Natural killer cell (primary cell): ENCODE measurements at regions of chr1 and their contacts with region 1.

Region 1: GRCh38 chr1:20696397-20697329 is 21.1 kb downstream of the KIF17 start:
- DNase-seq: peak; percentile 69 to 84
- ATAC-seq: peak; percentile 91 to 94 (median 93)
- H3K4me3 ChIP-seq: peak overlapping the region; percentile 66
- H3K4me3 Mint-ChIP-seq: peak overlapping the region; percentile 95
- H3K27ac ChIP-seq: no peak overlapping the region
- H3K27ac Mint-ChIP-seq: peak overlapping the region; percentile 14 to 83
- H3K4me1 ChIP-seq: peaks cover 12% of the 10 kb centered on the region
- H3K4me1 Mint-ChIP-seq: peaks cover 11 to 13% of the 10 kb centered on the region in 2 donors
- H3K27me3 ChIP-seq: no peaks in the 10 kb centered on the region
- H3K27me3 Mint-ChIP-seq: peaks cover 0 to 6% of the 10 kb centered on the region in 2 donors
- CTCF ChIP-seq: peak; percentile 99

Region 2: DNA sequence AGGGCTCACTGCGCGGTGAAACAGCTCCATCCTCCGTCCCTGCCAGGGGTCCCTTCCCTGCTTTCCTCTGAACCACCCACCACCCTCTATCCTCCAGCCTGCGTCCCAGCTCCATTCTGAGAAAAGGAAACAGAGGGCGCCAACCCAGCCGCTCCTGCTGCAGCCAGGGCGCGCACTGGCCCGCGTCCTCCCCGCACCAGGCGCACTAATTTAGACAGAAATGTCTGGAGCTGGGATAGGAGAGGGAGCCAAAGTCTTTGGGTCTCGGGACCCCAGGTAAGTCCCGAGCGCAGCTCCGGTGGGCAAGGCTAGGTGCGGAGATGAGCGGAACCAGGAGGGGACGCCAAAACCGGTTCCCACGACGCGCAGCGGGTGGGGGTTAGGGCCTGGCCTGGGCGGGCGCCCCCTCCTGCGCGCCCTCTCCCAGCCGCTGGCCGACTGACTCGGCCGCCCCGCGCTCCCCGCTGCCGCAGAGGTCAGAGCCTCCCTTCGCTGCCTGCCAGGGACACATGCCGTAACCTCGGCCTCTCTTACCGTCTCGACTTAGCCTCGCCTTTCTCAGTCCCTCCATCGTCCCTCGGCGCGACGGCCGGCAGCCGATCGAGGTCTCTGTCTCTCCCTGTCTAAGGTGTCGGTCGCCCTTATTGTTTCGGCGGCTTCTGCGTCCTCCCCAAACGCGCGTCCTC is 212.7 kb before region 1 on chr1:
- intact Hi-C with region 1: no loop called
- DNase-seq: peak in 1 of 2 donors; percentile 27
- ATAC-seq: no peak
- H3K4me3 ChIP-seq: peak overlapping the region; percentile 25
- H3K4me3 Mint-ChIP-seq: peak overlapping the region; percentile 73
- H3K27ac ChIP-seq: no peak overlapping the region
- H3K27ac Mint-ChIP-seq: no peak overlapping the region
- H3K4me1 ChIP-seq: peaks cover 27% of the 10 kb centered on the region
- H3K4me1 Mint-ChIP-seq: peaks cover 0 to 14% of the 10 kb centered on the region in 2 donors
- H3K27me3 ChIP-seq: peaks cover 28% of the 10 kb centered on the region
- H3K27me3 Mint-ChIP-seq: peaks cover 54 to 71% of the 10 kb centered on the region in 2 donors
- CTCF ChIP-seq: no peak

Region 3: DNA sequence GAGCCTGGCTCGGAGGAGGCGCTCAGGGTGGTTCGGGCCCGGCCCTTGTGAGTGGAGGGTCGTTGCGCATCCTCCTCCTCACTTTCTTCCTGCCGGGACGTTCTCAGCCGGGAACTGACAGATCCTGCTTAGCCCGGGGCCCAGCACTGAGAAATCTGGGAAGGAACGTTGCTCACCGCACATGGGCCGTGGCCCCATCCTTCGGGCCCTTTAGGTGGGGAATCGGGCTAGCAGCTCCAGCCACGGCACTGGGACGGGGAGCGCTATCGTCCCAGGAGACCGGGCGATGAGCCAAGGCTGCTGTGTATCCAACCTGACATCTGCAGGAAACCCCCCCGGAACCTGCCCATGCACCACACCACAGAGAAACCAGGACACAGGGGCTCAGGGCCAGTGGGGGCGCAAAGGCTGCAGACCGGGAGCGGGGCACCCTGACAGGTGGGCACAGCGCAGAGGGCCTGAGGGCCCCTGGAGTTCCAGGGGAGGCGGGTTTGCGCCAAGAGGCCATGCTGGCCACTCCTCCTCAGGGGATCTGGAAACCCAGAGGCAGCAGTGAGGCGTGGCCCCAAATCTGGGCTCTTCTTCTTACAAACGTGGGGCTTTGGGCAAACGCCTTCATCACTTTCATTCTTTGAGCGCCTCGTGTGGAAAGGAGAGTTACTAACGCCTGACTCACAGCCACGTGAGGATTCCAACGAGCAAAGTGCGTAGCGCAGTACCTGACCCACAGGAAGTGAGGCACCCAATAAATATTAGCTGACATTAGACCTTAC is 36.1 kb after region 1 on chr1 and contains the start of gene SH2D5:
- intact Hi-C with region 1: loop called (anchors 1 kb)
- DNase-seq: peak; percentile 66 to 82
- ATAC-seq: peak; percentile 79 to 88 (median 82)
- H3K4me3 ChIP-seq: peak within 1 kb of the TSS; percentile 47
- H3K4me3 Mint-ChIP-seq: peak within 1 kb of the TSS; percentile 90
- H3K27ac ChIP-seq: no peak within 1 kb of the TSS
- H3K27ac Mint-ChIP-seq: peak within 1 kb of the TSS; percentile 36 to 87
- H3K4me1 ChIP-seq: peaks cover 23% of the 10 kb centered on the region
- H3K4me1 Mint-ChIP-seq: peaks cover 11 to 31% of the 10 kb centered on the region in 2 donors
- H3K27me3 ChIP-seq: peaks cover 15% of the 10 kb centered on the region
- H3K27me3 Mint-ChIP-seq: peaks cover 24 to 32% of the 10 kb centered on the region in 2 donors
- CTCF ChIP-seq: peak; percentile 17
- total RNA-seq, gene SH2D5: not detected

Region 4: GRCh38 chr1:20767271-20767670 is 70.6 kb after region 1 on chr1:
- intact Hi-C with region 1: no loop called
- DNase-seq: no peak
- ATAC-seq: no peak
- H3K4me3 ChIP-seq: no peak overlapping the region
- H3K4me3 Mint-ChIP-seq: no peak overlapping the region
- H3K27ac ChIP-seq: no peak overlapping the region
- H3K27ac Mint-ChIP-seq: no peak overlapping the region
- H3K4me1 ChIP-seq: no peaks in the 10 kb centered on the region
- H3K4me1 Mint-ChIP-seq: no peaks in the 10 kb centered on the region
- H3K27me3 ChIP-seq: no peaks in the 10 kb centered on the region
- H3K27me3 Mint-ChIP-seq: no peaks in the 10 kb centered on the region
- CTCF ChIP-seq: no peak

Region 5: GRCh38 chr1:20786253-20787028 is 89.8 kb after region 1 on chr1:
- intact Hi-C with region 1: loop called (anchors 2 kb)
- DNase-seq: peak; percentile 93 to 98
- ATAC-seq: peak; percentile 73 to 86 (median 78)
- H3K4me3 ChIP-seq: peak overlapping the region; percentile 77
- H3K4me3 Mint-ChIP-seq: peak overlapping the region; percentile 99
- H3K27ac ChIP-seq: peak overlapping the region; percentile 92
- H3K27ac Mint-ChIP-seq: peak overlapping the region; percentile 97 to 98
- H3K4me1 ChIP-seq: peaks cover 17% of the 10 kb centered on the region
- H3K4me1 Mint-ChIP-seq: peaks cover 34 to 35% of the 10 kb centered on the region in 2 donors
- H3K27me3 ChIP-seq: no peaks in the 10 kb centered on the region
- H3K27me3 Mint-ChIP-seq: no peaks in the 10 kb centered on the region
- CTCF ChIP-seq: no peak

Region 6: GRCh38 chr1:21200767-21201166 is 504.1 kb after region 1 on chr1:
- intact Hi-C with region 1: loop called (anchors 1 kb)
- DNase-seq: no peak
- ATAC-seq: no peak
- H3K4me3 ChIP-seq: no peak overlapping the region
- H3K4me3 Mint-ChIP-seq: no peak overlapping the region
- H3K27ac ChIP-seq: no peak overlapping the region
- H3K27ac Mint-ChIP-seq: no peak overlapping the region
- H3K4me1 ChIP-seq: no peaks in the 10 kb centered on the region
- H3K4me1 Mint-ChIP-seq: no peaks in the 10 kb centered on the region
- H3K27me3 ChIP-seq: no peaks in the 10 kb centered on the region
- H3K27me3 Mint-ChIP-seq: peaks cover 5 to 11% of the 10 kb centered on the region in 2 donors
- CTCF ChIP-seq: no peak